Right cardiac atrium (tissue), 5 donors: ENCODE measurements at regions of chr20 and their contacts with region 1.

Region 1: GRCh38 chr20:50929299-50930138 is 1.7 kb downstream of the ADNP start:
- DNase-seq: peak; percentile 88 to 93 (median 90)
- ATAC-seq: peak; percentile 57 to 71
- H3K4me3 ChIP-seq: peak overlapping the region; percentile 99
- H3K27ac ChIP-seq: peak overlapping the region; percentile 72
- H3K4me1 ChIP-seq: peaks cover 7% of the 10 kb centered on the region
- H3K27me3 ChIP-seq: no peaks in the 10 kb centered on the region

Region 2: GRCh38 chr20:50815162-50815989 is 114.1 kb before region 1 on chr20:
- intact Hi-C with region 1: loop called in 1 of 4 experiments (anchors 10 kb)
- DNase-seq: no peak
- ATAC-seq: no peak
- H3K4me3 ChIP-seq: no peak overlapping the region
- H3K27ac ChIP-seq: no peak overlapping the region
- H3K4me1 ChIP-seq: no peaks in the 10 kb centered on the region
- H3K27me3 ChIP-seq: no peaks in the 10 kb centered on the region